CD4-positive, alpha-beta memory T cell (primary cell): ENCODE measurements at regions of chr15 and their contacts with region 1.

Region 1: GRCh38 chr15:42920519-42921227 is at the start of gene TTBK2:
- DNase-seq: peak; percentile 97 to 98 (median 98)
- H3K4me3 ChIP-seq: peak within 1 kb of the TSS; percentile 81 to 98
- H3K4me3 Mint-ChIP-seq: peak within 1 kb of the TSS; percentile 94 to 99 (median 96)
- H3K27ac ChIP-seq: peak within 1 kb of the TSS; percentile 60
- H3K27ac Mint-ChIP-seq: peak within 1 kb of the TSS; percentile 89 to 98 (median 95)
- H3K4me1 ChIP-seq: peaks cover 25% of the 10 kb centered on the region
- H3K4me1 Mint-ChIP-seq: peaks cover 15 to 37% (median 26%) of the 10 kb centered on the region in 4 donors
- H3K27me3 ChIP-seq: no peaks in the 10 kb centered on the region
- H3K27me3 Mint-ChIP-seq: no peaks in the 10 kb centered on the region
- total RNA-seq, gene TTBK2: 27.4 to 28.2 TPM

Region 2: GRCh38 chr15:42273102-42273899 is 647.4 kb before region 1 on chr15 and contains the starts of genes GANC and TMEM87A:
- CTCF ChIA-PET with region 1: no interaction called
- POLR2A ChIA-PET with region 1: no interaction called
- intact Hi-C with region 1: loop called (anchors 10 kb)
- DNase-seq: peak; percentile 94 to 98 (median 95)
- H3K4me3 ChIP-seq: peak within 1 kb of the TSS; percentile 73 to 98
- H3K4me3 Mint-ChIP-seq: peak within 1 kb of the TSS; percentile 92 to 100 (median 99)
- H3K27ac ChIP-seq: peak within 1 kb of the TSS; percentile 87
- H3K27ac Mint-ChIP-seq: peak within 1 kb of the TSS; percentile 95 to 100 (median 99)
- H3K4me1 ChIP-seq: peaks cover 52% of the 10 kb centered on the region
- H3K4me1 Mint-ChIP-seq: peaks cover 38 to 69% (median 53%) of the 10 kb centered on the region in 4 donors
- H3K27me3 ChIP-seq: no peaks in the 10 kb centered on the region
- H3K27me3 Mint-ChIP-seq: peaks cover 0 to 2% of the 10 kb centered on the region in 2 donors
- total RNA-seq, gene GANC: 61.7 to 63.4 TPM
- total RNA-seq, gene TMEM87A: 49.9 to 56.6 TPM

Region 3: GRCh38 chr15:42575188-42576039 is 345.3 kb before region 1 on chr15 and contains the start of gene STARD9:
- CTCF ChIA-PET with region 1: no interaction called
- POLR2A ChIA-PET with region 1: no interaction called
- intact Hi-C with region 1: loop called (anchors 2 kb)
- DNase-seq: peak; percentile 93 to 95 (median 93)
- H3K4me3 ChIP-seq: peak within 1 kb of the TSS; percentile 78 to 89
- H3K4me3 Mint-ChIP-seq: peak within 1 kb of the TSS; percentile 89 to 96 (median 92)
- H3K27ac ChIP-seq: peak within 1 kb of the TSS; percentile 44
- H3K27ac Mint-ChIP-seq: peak within 1 kb of the TSS; percentile 78 to 94 (median 86)
- H3K4me1 ChIP-seq: peaks cover 16% of the 10 kb centered on the region
- H3K4me1 Mint-ChIP-seq: peaks cover 11 to 34% (median 17%) of the 10 kb centered on the region in 4 donors
- H3K27me3 ChIP-seq: no peaks in the 10 kb centered on the region
- H3K27me3 Mint-ChIP-seq: peaks cover 6 to 12% of the 10 kb centered on the region in 2 donors
- total RNA-seq, gene STARD9: 4.5 to 6.1 TPM

Region 4: GRCh38 chr15:42736793-42737528 is 183.7 kb before region 1 on chr15 and contains the start of gene CDAN1:
- CTCF ChIA-PET with region 1: interaction called, 5 read pairs
- POLR2A ChIA-PET with region 1: interaction called, 21 read pairs
- intact Hi-C with region 1: loop called (anchors 1 kb)
- DNase-seq: peak; percentile 87 to 91 (median 89)
- H3K4me3 ChIP-seq: peak within 1 kb of the TSS; percentile 60 to 80
- H3K4me3 Mint-ChIP-seq: peak within 1 kb of the TSS; percentile 82 to 87 (median 84)
- H3K27ac ChIP-seq: peak within 1 kb of the TSS; percentile 82
- H3K27ac Mint-ChIP-seq: peak within 1 kb of the TSS; percentile 79 to 92 (median 87)
- H3K4me1 ChIP-seq: peaks cover 21% of the 10 kb centered on the region
- H3K4me1 Mint-ChIP-seq: peaks cover 6 to 29% (median 10%) of the 10 kb centered on the region in 4 donors
- H3K27me3 ChIP-seq: no peaks in the 10 kb centered on the region
- H3K27me3 Mint-ChIP-seq: no peaks in the 10 kb centered on the region
- total RNA-seq, gene CDAN1: 35.1 to 36.5 TPM

Region 5: DNA sequence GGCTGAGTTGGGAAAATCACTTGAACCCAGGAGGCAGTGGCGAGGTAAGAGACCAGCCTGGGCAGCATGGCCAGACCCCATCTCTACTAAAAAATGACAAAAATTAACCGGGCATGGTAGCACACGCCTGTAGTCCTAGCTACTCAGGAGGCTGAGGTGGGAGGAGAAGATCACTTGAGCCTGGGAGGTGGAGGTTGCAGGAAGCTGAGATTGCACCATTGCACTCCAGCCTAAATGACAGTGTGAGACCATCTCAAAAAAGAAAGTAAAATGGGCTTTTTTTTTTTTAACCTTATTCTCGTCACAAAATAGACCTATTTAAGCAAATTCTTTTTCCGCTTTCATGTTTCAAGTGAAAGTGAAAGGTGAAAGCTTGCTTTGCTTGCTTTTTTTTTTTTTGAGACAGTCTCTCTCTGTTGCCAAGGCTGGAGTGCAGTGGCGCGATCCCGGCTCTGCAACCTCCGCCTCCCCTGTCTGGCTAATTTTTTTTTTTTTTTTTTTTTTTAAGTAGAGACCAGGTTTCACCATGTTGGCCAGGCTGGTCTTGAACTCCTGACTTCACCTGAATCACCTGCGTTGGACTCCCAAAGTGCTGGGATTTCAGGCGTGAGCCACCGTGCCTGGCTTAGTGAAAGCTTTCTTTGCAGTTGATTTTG is 829.1 kb after region 1 on chr15:
- CTCF ChIA-PET with region 1: no interaction called
- POLR2A ChIA-PET with region 1: no interaction called
- intact Hi-C with region 1: loop called (anchors 5 kb)
- DNase-seq: peak; percentile 75 to 86 (median 82)
- H3K4me3 ChIP-seq: peak overlapping the region in 1 of 2 donors; percentile 49
- H3K4me3 Mint-ChIP-seq: peak overlapping the region; percentile 69 to 87 (median 82)
- H3K27ac ChIP-seq: peak overlapping the region; percentile 59
- H3K27ac Mint-ChIP-seq: peak overlapping the region; percentile 91 to 96 (median 94)
- H3K4me1 ChIP-seq: peaks cover 66% of the 10 kb centered on the region
- H3K4me1 Mint-ChIP-seq: peaks cover 27 to 70% (median 47%) of the 10 kb centered on the region in 4 donors
- H3K27me3 ChIP-seq: no peaks in the 10 kb centered on the region
- H3K27me3 Mint-ChIP-seq: no peaks in the 10 kb centered on the region